ENCODE measurements at regions of chr2 and their contacts with region 1.

Region 1: DNA sequence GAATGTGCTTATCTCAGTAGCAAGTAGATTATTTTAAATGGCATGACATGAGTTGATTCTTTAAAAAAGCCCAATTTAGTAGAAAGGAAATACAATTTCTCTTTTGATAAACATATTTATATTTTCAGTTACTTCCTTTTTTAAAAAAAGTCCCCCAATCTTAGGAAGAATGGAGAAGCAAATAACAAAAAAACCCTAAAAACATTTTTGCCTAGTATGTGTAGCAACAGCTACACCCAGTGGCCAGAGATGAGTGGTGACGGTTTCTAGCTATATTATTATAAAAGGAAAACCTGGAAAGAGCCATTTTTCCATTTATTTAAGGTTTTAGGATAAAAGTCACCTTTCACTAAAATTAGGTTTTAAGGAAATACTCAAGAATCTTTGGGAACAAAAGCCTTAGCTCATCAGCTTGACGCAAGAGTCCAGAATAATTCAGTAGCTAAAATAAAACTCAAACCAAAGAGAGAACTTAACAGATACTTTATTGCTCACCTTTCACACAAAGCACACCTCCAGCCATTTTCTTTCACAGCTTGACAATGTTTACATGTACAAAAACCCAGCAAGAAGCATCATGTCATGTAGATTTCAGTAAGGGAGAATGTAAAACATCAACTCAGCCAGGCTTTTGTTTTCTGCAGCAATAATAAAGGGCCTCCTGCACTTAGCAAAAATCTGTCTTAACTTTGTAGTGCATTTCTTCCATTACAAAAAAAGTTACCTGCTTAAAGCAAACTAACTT is 15.7 kb downstream of the FAM98A start:
- DNase-seq: peak; percentile 49
- H3K4me3 Mint-ChIP-seq: no peak overlapping the region
- H3K27ac Mint-ChIP-seq: no peak overlapping the region
- H3K4me1 Mint-ChIP-seq: no peaks in the 10 kb centered on the region
- H3K27me3 Mint-ChIP-seq: no peaks in the 10 kb centered on the region
- CTCF ChIP-seq: peak; percentile 76

Region 2: DNA sequence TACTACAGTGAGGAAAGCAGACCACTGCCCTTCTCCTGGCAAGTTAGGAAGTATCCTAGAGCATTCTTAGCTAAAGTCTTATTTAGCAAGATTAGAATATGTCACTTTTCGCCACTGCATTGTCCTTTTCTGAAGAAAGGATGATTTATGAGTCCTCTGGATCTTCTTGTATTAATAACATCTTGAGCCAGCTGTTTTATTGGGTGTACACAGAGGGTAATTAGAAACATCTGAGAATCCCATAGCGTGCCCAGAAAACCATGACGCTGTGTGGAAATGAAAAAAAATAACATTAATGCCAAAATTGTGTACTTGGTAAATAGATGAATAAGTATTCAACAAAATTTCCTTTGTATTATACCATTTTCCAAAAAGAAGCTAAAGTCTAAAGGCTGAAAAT is 437.9 kb before region 1 on chr2:
- CTCF ChIA-PET with region 1: no interaction called
- POLR2A ChIA-PET with region 1: no interaction called
- intact Hi-C with region 1: no loop called
- DNase-seq: no peak
- H3K4me3 Mint-ChIP-seq: no peak overlapping the region
- H3K27ac Mint-ChIP-seq: no peak overlapping the region
- H3K4me1 Mint-ChIP-seq: peaks cover 28% of the 10 kb centered on the region
- H3K27me3 Mint-ChIP-seq: no peaks in the 10 kb centered on the region
- CTCF ChIP-seq: no peak

Region 3: DNA sequence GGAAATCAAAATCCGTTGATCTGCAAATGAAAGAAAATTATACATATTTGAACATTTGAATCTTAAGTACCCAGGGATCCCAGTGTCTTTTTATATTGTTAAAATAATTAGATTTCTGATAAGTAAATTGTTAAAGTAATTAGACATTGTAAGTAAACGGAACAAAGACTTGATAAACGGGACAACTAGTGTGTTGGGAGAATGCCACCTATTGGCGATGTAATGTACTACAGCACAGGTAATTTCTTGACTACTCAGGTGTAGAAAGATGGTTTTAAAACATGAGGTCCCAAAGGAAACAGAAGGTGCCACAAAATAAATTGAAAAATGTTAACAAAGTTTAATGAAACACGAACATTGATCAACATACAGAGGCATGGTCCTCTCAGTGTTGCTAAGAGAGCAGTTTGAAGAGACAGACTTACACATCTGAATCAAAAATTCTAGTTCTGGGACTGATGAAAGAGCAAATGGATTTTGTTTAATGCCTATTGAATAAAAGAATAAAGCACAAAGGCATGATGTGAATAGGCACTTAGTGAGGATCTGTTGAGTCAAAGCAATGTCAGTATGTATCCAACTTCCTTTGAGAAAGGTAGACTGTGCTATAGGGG is 210.3 kb before region 1 on chr2:
- CTCF ChIA-PET with region 1: interaction called, 16 read pairs
- POLR2A ChIA-PET with region 1: no interaction called
- intact Hi-C with region 1: no loop called
- DNase-seq: peak; percentile 73
- H3K4me3 Mint-ChIP-seq: no peak overlapping the region
- H3K27ac Mint-ChIP-seq: no peak overlapping the region
- H3K4me1 Mint-ChIP-seq: peaks cover 13% of the 10 kb centered on the region
- H3K27me3 Mint-ChIP-seq: no peaks in the 10 kb centered on the region
- CTCF ChIP-seq: peak; percentile 72

Region 4: GRCh38 chr2:33380001-33380609 is 203.3 kb before region 1 on chr2:
- CTCF ChIA-PET with region 1: interaction called, 11 read pairs
- POLR2A ChIA-PET with region 1: no interaction called
- intact Hi-C with region 1: no loop called
- DNase-seq: peak; percentile 18
- H3K4me3 Mint-ChIP-seq: no peak overlapping the region
- H3K27ac Mint-ChIP-seq: no peak overlapping the region
- H3K4me1 Mint-ChIP-seq: no peaks in the 10 kb centered on the region
- H3K27me3 Mint-ChIP-seq: no peaks in the 10 kb centered on the region
- CTCF ChIP-seq: peak; percentile 82

Region 5: GRCh38 chr2:33412920-33413319 is 170.4 kb before region 1 on chr2:
- CTCF ChIA-PET with region 1: interaction called, 14 read pairs
- POLR2A ChIA-PET with region 1: interaction called, 3 read pairs
- intact Hi-C with region 1: loop called (anchors 1 kb)
- DNase-seq: peak; percentile 55
- H3K4me3 Mint-ChIP-seq: no peak overlapping the region
- H3K27ac Mint-ChIP-seq: no peak overlapping the region
- H3K4me1 Mint-ChIP-seq: peaks cover 5% of the 10 kb centered on the region
- H3K27me3 Mint-ChIP-seq: no peaks in the 10 kb centered on the region
- CTCF ChIP-seq: peak; percentile 45

Region 6: DNA sequence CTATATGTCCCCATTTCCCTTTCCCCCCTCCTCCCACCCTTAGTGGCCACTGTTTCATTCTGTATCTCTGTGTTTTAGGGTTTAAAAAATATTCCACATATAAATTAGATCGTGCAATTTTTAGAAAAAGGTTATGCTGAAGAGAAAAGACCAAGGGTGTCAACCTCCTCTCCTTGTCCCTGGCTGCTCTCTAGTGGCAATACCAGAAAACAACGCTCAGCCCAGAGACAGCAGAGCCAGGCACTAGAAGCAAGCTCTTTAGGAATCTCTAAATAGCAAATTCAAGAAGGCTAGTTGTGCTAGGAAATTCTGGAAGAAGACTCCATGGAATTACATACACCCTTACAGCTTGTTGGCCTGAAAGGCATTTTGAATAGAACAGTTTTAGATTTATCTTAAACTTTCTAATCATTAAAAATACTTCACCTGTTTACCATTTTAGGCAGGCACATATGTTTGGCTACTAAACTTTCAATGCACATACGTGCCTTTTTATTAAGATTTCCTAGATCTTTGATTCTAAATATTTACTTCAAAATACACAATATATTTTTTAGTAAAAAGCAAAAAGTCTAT is 142.0 kb before region 1 on chr2:
- CTCF ChIA-PET with region 1: interaction called, 16 read pairs
- POLR2A ChIA-PET with region 1: no interaction called
- intact Hi-C with region 1: loop called (anchors 1 kb)
- DNase-seq: peak; percentile 71
- H3K4me3 Mint-ChIP-seq: no peak overlapping the region
- H3K27ac Mint-ChIP-seq: no peak overlapping the region
- H3K4me1 Mint-ChIP-seq: no peaks in the 10 kb centered on the region
- H3K27me3 Mint-ChIP-seq: no peaks in the 10 kb centered on the region
- CTCF ChIP-seq: peak; percentile 80

Region 7: GRCh38 chr2:33475224-33476130 is 107.9 kb before region 1 on chr2:
- CTCF ChIA-PET with region 1: interaction called, 20 read pairs
- POLR2A ChIA-PET with region 1: interaction called, 12 read pairs
- intact Hi-C with region 1: loop called (anchors 1 kb)
- DNase-seq: peak; percentile 76
- H3K4me3 Mint-ChIP-seq: peak overlapping the region; percentile 92
- H3K27ac Mint-ChIP-seq: peak overlapping the region; percentile 50
- H3K4me1 Mint-ChIP-seq: no peaks in the 10 kb centered on the region
- H3K27me3 Mint-ChIP-seq: no peaks in the 10 kb centered on the region
- CTCF ChIP-seq: peak; percentile 65

Region 8: GRCh38 chr2:33595385-33595784 is 12.0 kb after region 1 on chr2:
- CTCF ChIA-PET with region 1: interaction called, 14 read pairs
- POLR2A ChIA-PET with region 1: interaction called, 9 read pairs
- intact Hi-C with region 1: no loop called
- DNase-seq: no peak
- H3K4me3 Mint-ChIP-seq: no peak overlapping the region
- H3K27ac Mint-ChIP-seq: no peak overlapping the region
- H3K4me1 Mint-ChIP-seq: peaks cover 9% of the 10 kb centered on the region
- H3K27me3 Mint-ChIP-seq: no peaks in the 10 kb centered on the region
- CTCF ChIP-seq: no peak

Region 9: DNA sequence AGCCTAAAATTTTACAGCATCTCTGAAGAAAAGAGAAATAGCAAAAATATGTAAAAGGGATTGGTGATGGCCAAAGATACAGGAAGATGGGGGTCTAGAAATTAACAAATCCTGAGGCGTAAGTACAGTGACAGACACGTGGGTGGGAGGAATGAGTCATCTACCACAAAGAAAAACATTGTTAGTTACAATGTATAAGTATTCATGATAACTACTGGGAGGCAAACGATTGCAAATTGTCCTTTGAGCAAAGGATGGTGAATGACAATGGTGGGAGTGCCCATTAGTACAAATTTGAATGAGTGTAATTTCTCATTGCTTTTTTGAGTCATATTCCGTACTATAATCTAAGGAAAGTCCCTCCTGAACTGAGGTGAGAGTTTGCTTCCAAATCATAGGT is 824.7 kb after region 1 on chr2:
- CTCF ChIA-PET with region 1: no interaction called
- POLR2A ChIA-PET with region 1: no interaction called
- intact Hi-C with region 1: no loop called
- DNase-seq: no peak
- H3K4me3 Mint-ChIP-seq: no peak overlapping the region
- H3K27ac Mint-ChIP-seq: no peak overlapping the region
- H3K4me1 Mint-ChIP-seq: no peaks in the 10 kb centered on the region
- H3K27me3 Mint-ChIP-seq: no peaks in the 10 kb centered on the region
- CTCF ChIP-seq: no peak

Region 10: DNA sequence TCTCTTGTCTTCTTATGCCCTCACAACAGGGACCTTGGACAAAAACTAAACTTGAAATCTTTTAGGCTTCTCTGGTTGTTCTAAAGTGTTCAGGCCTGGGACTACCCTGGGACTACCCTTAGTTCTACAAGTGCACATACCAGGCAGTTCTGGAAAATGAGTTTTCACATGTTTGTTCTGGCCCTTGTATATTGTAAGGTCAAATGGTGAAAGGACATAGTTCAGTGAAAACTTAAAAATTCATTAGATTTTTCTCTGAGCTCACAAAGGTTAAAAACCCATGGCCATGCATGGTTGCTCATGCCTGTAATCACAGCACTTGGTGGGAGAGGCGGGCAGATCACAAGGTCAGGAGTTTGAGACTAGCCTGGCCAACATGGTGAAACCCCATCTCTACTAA is 891.3 kb after region 1 on chr2:
- CTCF ChIA-PET with region 1: no interaction called
- POLR2A ChIA-PET with region 1: no interaction called
- intact Hi-C with region 1: no loop called
- DNase-seq: no peak
- H3K4me3 Mint-ChIP-seq: no peak overlapping the region
- H3K27ac Mint-ChIP-seq: no peak overlapping the region
- H3K4me1 Mint-ChIP-seq: no peaks in the 10 kb centered on the region
- H3K27me3 Mint-ChIP-seq: no peaks in the 10 kb centered on the region
- CTCF ChIP-seq: no peak

Measured in MCF 10A (cell line).